T-cell (primary cell): ENCODE measurements at regions of chr5 and their contacts with region 1.

Region 1: GRCh38 chr5:84149094-84149493 is 235.6 kb downstream of the EDIL3 start:
- DNase-seq: no peak
- ATAC-seq: no peak
- H3K4me3 ChIP-seq: no peak overlapping the region
- H3K4me3 Mint-ChIP-seq: no peak overlapping the region
- H3K27ac ChIP-seq: no peak overlapping the region
- H3K27ac Mint-ChIP-seq: no peak overlapping the region
- H3K4me1 ChIP-seq: no peaks in the 10 kb centered on the region
- H3K4me1 Mint-ChIP-seq: no peaks in the 10 kb centered on the region
- H3K27me3 ChIP-seq: no peaks in the 10 kb centered on the region
- H3K27me3 Mint-ChIP-seq: no peaks in the 10 kb centered on the region

Region 2: GRCh38 chr5:84080908-84081307 is 68.2 kb before region 1 on chr5:
- CTCF ChIA-PET with region 1: no interaction called
- POLR2A ChIA-PET with region 1: interaction called in 1 of 2 experiments, 12 read pairs
- DNase-seq: no peak
- ATAC-seq: no peak
- H3K4me3 ChIP-seq: no peak overlapping the region
- H3K4me3 Mint-ChIP-seq: no peak overlapping the region
- H3K27ac ChIP-seq: no peak overlapping the region
- H3K27ac Mint-ChIP-seq: no peak overlapping the region
- H3K4me1 ChIP-seq: no peaks in the 10 kb centered on the region
- H3K4me1 Mint-ChIP-seq: no peaks in the 10 kb centered on the region
- H3K27me3 ChIP-seq: no peaks in the 10 kb centered on the region
- H3K27me3 Mint-ChIP-seq: no peaks in the 10 kb centered on the region